Gastrocnemius medialis (tissue), 4 donors: ENCODE measurements at regions of chr18 and their contacts with region 1.

Region 1: DNA sequence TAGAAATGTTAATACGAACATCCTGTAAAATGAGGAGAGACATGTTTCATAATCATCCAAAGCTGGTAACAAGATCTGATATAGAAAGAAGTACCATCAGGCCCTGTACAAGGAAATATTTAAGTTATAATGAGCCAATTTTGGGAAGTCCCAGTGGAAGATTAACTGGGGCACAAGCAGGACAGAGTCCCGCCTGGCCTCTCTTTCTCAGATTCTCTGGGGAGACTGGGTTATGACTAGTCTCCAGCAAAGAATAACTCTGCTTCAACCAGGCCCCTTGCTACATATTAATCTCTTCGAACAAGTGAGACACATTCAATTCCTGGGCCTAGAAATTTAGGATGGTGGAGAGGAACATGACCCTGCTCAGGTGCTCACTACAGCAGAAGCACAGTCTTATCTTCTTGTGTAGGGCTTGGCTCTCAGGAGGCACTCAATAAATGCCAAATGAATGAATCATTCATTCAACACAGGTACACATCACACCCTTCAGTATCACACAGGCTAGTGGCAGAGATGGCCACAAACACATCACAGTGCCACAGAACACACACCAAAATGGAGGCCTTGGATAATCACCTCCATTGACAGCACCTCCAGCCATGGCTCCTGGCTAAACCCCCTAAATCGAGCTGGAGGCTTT is 46.3 kb upstream of the RNF152 start:
- DNase-seq: no peak
- ATAC-seq: no peak
- H3K4me3 ChIP-seq: no peak overlapping the region
- H3K27ac ChIP-seq: no peak overlapping the region
- H3K4me1 ChIP-seq: no peaks in the 10 kb centered on the region
- H3K27me3 ChIP-seq: no peaks in the 10 kb centered on the region
- CTCF ChIP-seq: no peak
- POLR2A ChIP-seq: no peak

Region 2: GRCh38 chr18:61992285-61992684 is 53.1 kb after region 1 on chr18:
- in situ Hi-C with region 1: no loop called
- intact Hi-C with region 1: loop called (anchors 10 kb)
- DNase-seq: no peak
- ATAC-seq: no peak
- H3K4me3 ChIP-seq: no peak overlapping the region
- H3K27ac ChIP-seq: no peak overlapping the region
- H3K4me1 ChIP-seq: peaks cover 0 to 11% of the 10 kb centered on the region in 2 donors
- H3K27me3 ChIP-seq: no peaks in the 10 kb centered on the region
- CTCF ChIP-seq: no peak
- POLR2A ChIP-seq: no peak